ENCODE measurements at regions of chr11 and their contacts with region 1.

Region 1: GRCh38 chr11:27485930-27486773 is 13.6 kb upstream of the LGR4 start:
- DNase-seq: no peak
- CTCF ChIP-seq: peak; percentile 85

Region 2: DNA sequence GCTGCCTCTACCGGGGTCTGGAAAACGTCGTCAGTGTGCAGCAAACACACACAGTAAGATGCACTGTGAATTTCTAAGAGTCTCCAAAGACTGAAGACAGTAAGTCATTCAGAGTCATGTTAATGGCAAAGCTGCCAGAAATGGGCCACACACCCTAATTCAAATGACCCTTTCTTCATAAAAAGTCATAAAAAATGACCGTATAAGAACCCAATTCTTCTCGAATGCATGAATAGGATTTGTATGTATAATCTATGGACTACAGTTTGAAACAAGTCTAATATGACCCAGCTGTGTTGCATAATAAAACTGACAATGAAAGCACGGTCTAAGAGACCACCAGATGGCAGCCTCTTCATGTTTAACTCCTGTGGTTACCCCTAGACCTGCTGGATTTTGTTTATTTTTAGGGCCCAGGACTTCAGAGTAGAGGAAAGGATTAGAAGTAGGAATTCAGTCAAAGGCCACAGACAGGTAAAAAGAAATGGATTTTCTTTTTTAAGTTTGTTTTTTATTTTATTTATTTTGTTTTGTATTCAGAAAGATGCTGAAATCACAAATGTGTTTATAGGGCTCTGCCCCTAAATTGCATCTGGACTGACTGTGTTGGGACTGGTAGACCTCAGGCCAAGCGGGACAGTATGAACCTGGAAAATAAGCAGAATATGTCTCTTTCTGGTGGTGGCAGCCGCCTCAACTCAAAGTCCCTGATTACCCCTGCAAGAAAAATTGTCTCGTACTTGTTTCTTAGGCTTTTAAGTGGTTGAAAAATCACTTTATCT is 732.2 kb before region 1 on chr11:
- in situ Hi-C with region 1: loop called (anchors 25 kb)
- DNase-seq: no peak
- CTCF ChIP-seq: peak; percentile 56

Region 3: GRCh38 chr11:27296497-27296896 is 189.7 kb before region 1 on chr11:
- in situ Hi-C with region 1: no loop called
- DNase-seq: peak; percentile 49
- CTCF ChIP-seq: peak; percentile 58